K562 (cell line): ENCODE measurements at regions of chr5 and their contacts with region 1.

Region 1: DNA sequence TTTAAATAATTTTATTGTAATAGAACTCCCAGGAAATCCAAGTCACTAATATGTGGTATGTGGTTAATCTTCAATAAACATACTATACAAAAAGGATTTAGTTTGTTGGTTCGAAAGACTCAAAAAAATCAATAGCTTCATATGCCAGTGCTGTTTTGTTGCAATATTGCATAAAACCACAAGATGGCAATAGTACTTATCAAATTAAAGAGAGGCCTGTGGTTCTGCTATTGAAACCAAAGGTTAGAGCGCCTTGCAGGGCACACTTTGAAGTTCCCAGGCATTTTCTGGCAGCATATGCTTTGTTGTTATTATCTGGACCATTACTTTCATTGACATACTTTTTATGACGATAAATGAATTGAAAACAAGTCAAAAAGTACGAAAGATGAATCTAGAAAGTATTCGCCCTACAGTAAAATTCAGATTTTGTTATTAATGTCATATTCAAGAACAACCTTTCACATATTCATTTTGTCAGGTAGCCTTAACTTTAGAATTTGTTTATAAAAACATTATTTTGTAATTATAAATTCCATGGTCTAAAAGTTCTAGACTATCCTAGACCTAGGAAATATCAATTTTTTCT is 316.3 kb downstream of the MCTP1 start:
- DNase-seq: peak; percentile 11 to 61 (median 22)
- ATAC-seq: peak; percentile 93
- H3K4me3 ChIP-seq: no peak overlapping the region
- H3K27ac ChIP-seq: no peak overlapping the region
- H3K4me1 ChIP-seq: no peaks in the 10 kb centered on the region
- H3K27me3 ChIP-seq: no peaks in the 10 kb centered on the region
- CTCF ChIP-seq: peak; percentile 54 to 75 (median 71)
- EP300 ChIP-seq: no peak
- POLR2A ChIP-seq: no peak
- RAD21 ChIP-seq: peak; percentile 67 to 80

Region 2: DNA sequence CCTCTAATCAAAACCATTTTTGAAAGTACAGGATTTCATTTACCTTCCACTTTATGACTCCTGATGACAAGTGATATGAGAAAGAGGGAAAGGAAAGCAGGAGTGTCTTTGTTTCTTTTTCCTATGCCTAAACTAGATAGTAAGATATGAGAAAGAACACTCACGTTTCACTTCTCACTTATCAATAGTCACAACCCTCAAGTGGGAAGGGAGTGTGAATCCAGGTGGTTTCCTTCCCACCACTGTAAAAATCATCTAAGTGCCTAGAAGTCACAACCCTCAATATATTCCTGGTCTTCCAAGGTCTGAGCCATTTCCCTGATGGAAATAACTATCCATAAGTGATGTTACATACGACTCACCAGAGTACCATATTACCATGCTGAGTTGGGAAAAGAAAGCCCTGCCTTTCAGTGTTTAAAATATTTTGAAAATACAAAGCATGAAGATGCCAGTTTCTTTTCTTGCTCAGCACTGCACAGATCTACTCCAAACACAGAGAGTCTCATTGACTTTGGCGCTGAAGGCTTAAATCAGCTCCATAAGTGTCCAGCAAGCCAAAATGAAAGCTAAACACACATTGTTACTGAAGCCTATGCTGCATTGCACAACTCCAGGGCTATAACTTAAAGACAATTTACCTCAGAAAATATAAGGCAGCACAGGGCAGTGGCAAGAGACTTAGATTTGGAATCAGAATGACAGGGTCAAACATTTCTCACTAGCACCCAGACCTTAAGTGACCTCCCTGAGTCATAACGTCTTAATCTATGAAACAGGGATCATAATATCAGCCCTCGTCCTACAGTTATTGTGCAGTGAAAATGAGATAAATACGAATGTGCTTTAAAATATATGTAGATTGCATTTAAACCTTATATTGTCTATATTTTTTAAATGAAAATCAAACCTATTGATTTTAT is 651.4 kb before region 1 on chr5:
- CTCF ChIA-PET with region 1: no interaction called
- POLR2A ChIA-PET with region 1: no interaction called
- in situ Hi-C with region 1: no loop called
- intact Hi-C with region 1: no loop called
- DNase-seq: no peak
- ATAC-seq: no peak
- H3K4me3 ChIP-seq: no peak overlapping the region
- H3K27ac ChIP-seq: no peak overlapping the region
- H3K4me1 ChIP-seq: no peaks in the 10 kb centered on the region
- H3K27me3 ChIP-seq: no peaks in the 10 kb centered on the region
- CTCF ChIP-seq: no peak
- EP300 ChIP-seq: no peak
- POLR2A ChIP-seq: no peak
- RAD21 ChIP-seq: no peak

Region 3: GRCh38 chr5:95162231-95162992 is 193.8 kb after region 1 on chr5:
- CTCF ChIA-PET with region 1: no interaction called
- POLR2A ChIA-PET with region 1: no interaction called
- in situ Hi-C with region 1: no loop called
- intact Hi-C with region 1: no loop called
- DNase-seq: no peak
- ATAC-seq: no peak
- H3K4me3 ChIP-seq: no peak overlapping the region
- H3K27ac ChIP-seq: no peak overlapping the region
- H3K4me1 ChIP-seq: no peaks in the 10 kb centered on the region
- H3K27me3 ChIP-seq: no peaks in the 10 kb centered on the region
- CTCF ChIP-seq: no peak
- EP300 ChIP-seq: no peak
- POLR2A ChIP-seq: no peak
- RAD21 ChIP-seq: no peak

Region 4: DNA sequence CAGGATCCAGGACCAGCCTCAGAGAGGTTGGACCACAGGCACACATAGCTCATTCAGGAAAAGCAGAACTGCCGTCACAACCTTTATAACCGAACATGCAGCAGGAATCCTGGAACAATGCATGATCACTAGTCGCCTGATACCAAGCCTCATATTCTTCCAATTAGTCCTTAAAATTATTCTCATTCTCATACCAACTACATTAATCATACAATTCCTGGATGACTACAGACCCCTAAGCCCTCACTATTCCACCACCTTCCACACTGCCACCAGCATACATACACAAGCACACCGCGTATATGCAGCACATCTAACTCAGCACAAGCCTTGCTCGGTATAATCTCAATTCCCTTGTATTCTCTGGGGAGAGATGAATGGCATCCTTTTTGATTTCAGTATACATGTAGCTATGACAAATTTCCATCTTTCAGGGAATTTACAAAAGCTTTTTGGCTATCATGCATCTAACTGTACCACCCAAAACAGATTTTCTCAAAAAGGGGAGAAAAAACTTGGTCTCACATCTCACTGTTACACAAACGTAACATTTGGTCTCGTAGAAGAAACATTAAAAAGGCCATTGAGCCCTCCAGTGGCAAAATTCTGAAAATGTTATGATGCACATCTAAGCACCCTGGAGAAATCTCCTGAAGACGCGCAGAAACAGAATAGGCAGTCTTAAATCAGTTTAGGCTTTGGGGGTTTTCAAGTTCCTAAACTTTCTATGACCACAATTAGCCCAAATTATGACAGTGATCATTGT is 270.1 kb after region 1 on chr5:
- CTCF ChIA-PET with region 1: no interaction called
- POLR2A ChIA-PET with region 1: no interaction called
- in situ Hi-C with region 1: no loop called
- intact Hi-C with region 1: loop called (anchors 10 kb)
- DNase-seq: peak in 2 of 4 experiments; percentile 5 to 10
- ATAC-seq: no peak
- H3K4me3 ChIP-seq: no peak overlapping the region
- H3K27ac ChIP-seq: no peak overlapping the region
- H3K4me1 ChIP-seq: no peaks in the 10 kb centered on the region
- H3K27me3 ChIP-seq: no peaks in the 10 kb centered on the region
- CTCF ChIP-seq: no peak
- EP300 ChIP-seq: no peak
- POLR2A ChIP-seq: no peak
- RAD21 ChIP-seq: peak in 1 of 2 experiments; percentile 39; a peak in 2 of 4 replicates

Region 5: DNA sequence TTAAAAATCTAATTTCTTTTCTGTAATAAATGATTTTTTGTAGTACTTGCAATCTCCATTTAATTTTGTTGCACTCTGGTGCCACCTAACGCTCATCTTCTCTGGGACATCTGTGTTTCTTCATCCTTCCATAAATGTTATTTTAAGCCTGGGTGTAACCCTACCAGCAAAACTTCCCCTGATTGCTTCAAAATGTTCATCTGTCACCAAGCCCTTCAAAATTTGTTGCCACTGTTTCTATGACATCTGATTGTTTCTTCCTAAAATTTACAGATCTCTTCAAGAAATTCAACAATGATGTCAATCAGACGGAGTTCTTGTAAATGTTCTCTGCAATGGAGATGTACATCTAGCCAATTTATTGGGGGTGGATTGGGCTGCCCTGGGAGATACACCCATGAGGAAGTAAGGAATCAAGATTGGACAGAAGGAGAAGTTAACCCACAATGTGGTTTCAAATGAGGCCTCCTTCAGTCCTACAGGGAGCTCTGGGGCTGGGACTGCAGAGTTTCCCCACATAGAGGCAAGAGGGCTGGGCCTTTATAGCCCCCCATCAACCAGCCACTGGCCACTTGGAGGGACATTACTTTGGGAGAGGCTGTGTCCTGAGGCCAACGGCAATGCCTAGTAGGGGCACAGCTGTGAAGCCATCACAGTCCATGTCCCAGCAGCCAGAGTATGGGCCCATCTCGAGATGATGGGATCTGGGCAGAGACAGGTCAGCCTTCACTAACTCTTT is 293.0 kb after region 1 on chr5:
- CTCF ChIA-PET with region 1: interaction called, 3 read pairs
- POLR2A ChIA-PET with region 1: no interaction called
- in situ Hi-C with region 1: no loop called
- intact Hi-C with region 1: loop called (anchors 1 kb)
- DNase-seq: peak in 2 of 4 experiments; percentile 15 to 31
- ATAC-seq: peak; percentile 68; the same call in 2 of the 3 replicates
- H3K4me3 ChIP-seq: no peak overlapping the region
- H3K27ac ChIP-seq: no peak overlapping the region
- H3K4me1 ChIP-seq: no peaks in the 10 kb centered on the region
- H3K27me3 ChIP-seq: no peaks in the 10 kb centered on the region
- CTCF ChIP-seq: peak in 2 of 3 experiments; percentile 35 to 61; a peak in 3 of 6 replicates
- EP300 ChIP-seq: no peak
- POLR2A ChIP-seq: no peak
- RAD21 ChIP-seq: peak in 1 of 2 experiments; percentile 56; a peak in 3 of 4 replicates

Region 6: GRCh38 chr5:95446009-95446408 is 477.4 kb after region 1 on chr5:
- CTCF ChIA-PET with region 1: no interaction called
- POLR2A ChIA-PET with region 1: no interaction called
- in situ Hi-C with region 1: no loop called
- intact Hi-C with region 1: loop called (anchors 10 kb)
- DNase-seq: peak in 3 of 4 experiments; percentile 5 to 33 (median 29)
- ATAC-seq: peak; percentile 77
- H3K4me3 ChIP-seq: no peak overlapping the region
- H3K27ac ChIP-seq: no peak overlapping the region
- H3K4me1 ChIP-seq: peaks cover 0 to 11% of the 10 kb centered on the region in 2 experiments; a peak in 2 of 5 replicates
- H3K27me3 ChIP-seq: peaks cover 3 to 5% of the 10 kb centered on the region in 2 experiments; a peak in 4 of 5 replicates
- CTCF ChIP-seq: no peak
- EP300 ChIP-seq: no peak
- POLR2A ChIP-seq: no peak
- RAD21 ChIP-seq: no peak